Right ventricle myocardium inferior (tissue), 1 donor: ENCODE measurements at regions of chr3 and their contacts with region 1.

Region 1: DNA sequence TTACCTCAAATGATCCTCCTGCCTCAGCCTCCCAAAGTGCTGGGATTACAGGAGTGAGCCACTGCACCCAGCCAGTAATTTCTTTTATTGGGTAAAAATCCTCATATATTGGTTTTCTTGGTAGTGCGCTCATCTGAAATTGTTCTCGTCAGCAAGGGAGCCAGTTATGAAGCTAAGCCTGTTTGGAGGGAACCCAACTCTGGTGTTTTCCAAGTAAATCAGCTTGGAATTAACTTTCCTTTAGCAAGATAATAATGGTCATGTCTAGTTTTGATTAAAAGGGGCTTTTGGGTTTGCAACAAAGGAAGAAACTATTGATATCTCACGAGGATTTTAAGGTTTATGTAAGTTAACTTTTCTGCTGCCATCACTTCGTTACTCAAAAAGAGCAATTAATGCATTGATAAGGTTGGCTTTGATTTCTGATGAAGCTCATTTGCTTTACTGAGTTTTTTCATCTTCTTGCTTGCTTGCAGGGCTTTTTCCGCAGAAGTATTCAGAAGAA is 72.7 kb downstream of the RARB start:
- DNase-seq: no peak
- ATAC-seq: no peak

Region 2: DNA sequence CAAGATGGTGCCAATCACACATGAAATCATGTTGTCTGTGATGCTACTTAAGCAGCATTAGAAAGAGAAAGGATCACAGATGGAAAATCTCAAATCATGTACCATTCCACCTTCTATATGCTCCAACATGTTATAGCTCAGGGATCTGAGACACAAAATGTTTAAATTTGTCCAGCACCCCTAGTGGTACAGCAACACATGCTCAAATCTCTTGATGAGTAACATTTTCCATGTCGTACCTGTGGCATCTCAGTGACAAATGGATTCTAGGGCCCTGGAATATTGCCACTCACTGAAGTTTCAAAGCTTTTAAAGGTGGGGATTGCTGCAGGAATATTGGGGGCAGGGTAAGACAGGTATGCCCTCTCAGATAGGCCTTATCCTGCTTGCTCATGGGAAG is 586.7 kb before region 1 on chr3:
- intact Hi-C with region 1: no loop called
- DNase-seq: no peak
- ATAC-seq: no peak

Region 3: GRCh38 chr3:25483456-25483855 is 17.3 kb before region 1 on chr3:
- intact Hi-C with region 1: loop called (anchors 2 kb)
- DNase-seq: no peak
- ATAC-seq: peak; percentile 44